ENCODE measurements at regions of chr2 and their contacts with region 1.

Region 1: DNA sequence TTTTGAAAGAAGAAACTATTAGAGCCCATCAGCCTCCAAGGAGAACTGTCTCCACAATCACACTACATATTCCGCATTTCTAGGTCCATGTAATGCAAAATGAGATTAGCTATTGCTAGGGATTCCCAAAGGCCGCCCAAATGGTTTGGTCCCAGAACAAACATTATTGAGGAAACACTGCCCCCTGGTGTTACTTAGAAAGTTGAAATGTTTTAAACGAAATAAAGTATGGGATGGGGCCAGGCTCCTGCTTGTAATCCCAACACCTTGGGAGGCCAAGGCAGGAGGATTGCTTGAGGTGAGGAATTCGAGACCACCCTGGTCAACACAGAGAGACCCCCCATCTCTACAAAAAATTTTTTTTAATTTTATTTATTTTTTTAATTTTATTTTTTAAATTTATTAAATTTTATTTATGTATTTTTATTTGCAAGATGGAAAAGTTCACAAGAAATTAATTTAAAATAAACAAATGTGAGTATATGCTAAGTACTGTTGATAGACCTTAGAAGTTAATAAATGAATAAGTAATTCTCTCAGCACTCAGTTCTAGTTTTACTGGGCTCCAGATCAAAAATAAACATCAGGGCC is 5.5 kb downstream of the NHEJ1 start:
- DNase-seq: peak in 1 of 2 experiments; percentile 12
- H3K4me3 ChIP-seq: no peak overlapping the region
- H3K27ac ChIP-seq: no peak overlapping the region
- H3K4me1 ChIP-seq: no peaks in the 10 kb centered on the region
- H3K27me3 ChIP-seq: no peaks in the 10 kb centered on the region
- CTCF ChIP-seq: peak; percentile 81

Region 2: DNA sequence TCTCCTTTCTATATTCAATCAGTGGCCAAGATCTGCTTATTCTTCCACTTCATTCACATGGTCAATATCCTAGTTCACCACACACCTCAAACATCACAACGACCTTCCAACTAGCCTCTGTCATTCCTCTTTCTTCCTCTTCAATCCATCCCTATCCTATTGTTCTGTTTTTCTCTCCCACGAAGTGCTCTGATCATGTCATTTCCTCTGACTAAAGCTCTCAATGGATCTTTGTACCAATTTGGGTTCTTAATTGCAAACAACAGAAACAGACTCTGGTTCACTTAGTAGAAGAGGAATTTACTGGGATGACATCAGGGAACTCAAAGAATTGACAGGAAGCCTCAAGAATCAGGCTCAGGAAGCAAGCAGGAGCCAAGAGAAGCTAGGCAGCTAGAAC is 251.0 kb before region 1 on chr2:
- CTCF ChIA-PET with region 1: no interaction called
- POLR2A ChIA-PET with region 1: no interaction called
- intact Hi-C with region 1: no loop called
- DNase-seq: no peak
- H3K4me3 ChIP-seq: no peak overlapping the region
- H3K27ac ChIP-seq: no peak overlapping the region
- H3K4me1 ChIP-seq: 0 out of 2 replicates have a peak, but pooled peaks cover 3% of the 10 kb centered on the region
- H3K27me3 ChIP-seq: no peaks in the 10 kb centered on the region
- CTCF ChIP-seq: no peak

Region 3: DNA sequence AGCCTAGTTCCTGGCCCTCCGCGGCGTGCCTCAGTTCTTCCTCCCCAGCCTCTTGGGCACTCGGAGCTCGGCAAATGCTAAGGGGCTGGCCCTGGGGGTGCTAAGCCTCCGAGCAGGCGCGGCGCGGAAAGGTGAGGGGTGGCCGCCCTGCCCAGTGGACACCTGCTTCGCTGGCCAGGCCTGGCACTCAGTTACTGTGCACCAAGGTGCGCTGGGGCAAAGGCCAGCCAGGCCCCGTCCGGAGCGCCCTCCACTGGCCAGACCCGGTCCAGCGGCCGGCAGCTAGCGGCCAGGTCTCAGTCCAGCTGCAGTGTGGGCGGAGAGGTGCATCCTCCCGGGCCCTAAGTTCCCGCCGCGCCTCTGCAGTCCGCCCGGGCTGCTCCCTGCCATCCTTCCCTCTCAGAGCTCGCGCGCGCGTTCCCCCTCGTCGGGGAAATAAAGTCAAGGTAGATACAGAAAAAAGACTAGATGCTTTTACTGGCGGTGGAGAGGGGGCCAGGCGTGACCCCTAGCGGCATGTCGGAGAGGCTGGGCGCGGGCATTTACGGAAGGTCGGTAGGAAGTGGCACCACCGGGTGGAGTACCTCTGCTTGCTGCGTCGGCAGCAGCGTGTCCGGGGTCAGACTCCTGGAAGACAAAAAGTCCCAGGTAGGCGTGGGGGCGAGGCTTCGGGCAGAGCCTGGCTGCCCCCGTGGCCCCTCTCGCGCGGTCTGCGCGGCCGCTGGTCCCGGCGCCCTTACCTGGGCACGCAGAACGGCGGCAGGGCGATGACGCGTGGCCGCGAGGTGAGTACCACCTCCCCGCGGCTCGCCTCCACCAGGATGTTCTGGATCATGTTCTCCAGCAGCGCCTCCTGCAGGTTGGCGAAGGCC is 152.5 kb before region 1 on chr2:
- CTCF ChIA-PET with region 1: interaction called, 4 read pairs
- POLR2A ChIA-PET with region 1: no interaction called
- intact Hi-C with region 1: loop called (anchors 5 kb)
- DNase-seq: peak in 1 of 2 experiments; percentile 75
- H3K4me3 ChIP-seq: peak overlapping the region; percentile 55
- H3K27ac ChIP-seq: no peak overlapping the region
- H3K4me1 ChIP-seq: 0 out of 2 replicates have a peak, but pooled peaks cover 5% of the 10 kb centered on the region
- H3K27me3 ChIP-seq: peaks cover 19% of the 10 kb centered on the region
- CTCF ChIP-seq: peak; percentile 71

Region 4: GRCh38 chr2:219029829-219030165 is 125.4 kb before region 1 on chr2:
- CTCF ChIA-PET with region 1: interaction called, 22 read pairs
- POLR2A ChIA-PET with region 1: interaction called, 4 read pairs
- intact Hi-C with region 1: loop called (anchors 1 kb)
- DNase-seq: peak; percentile 58 to 80
- H3K4me3 ChIP-seq: no peak overlapping the region
- H3K27ac ChIP-seq: no peak overlapping the region
- H3K4me1 ChIP-seq: no peaks in the 10 kb centered on the region
- H3K27me3 ChIP-seq: peaks cover 68% of the 10 kb centered on the region; the same call in 1 of the 2 replicates
- CTCF ChIP-seq: peak; percentile 93

Region 5: DNA sequence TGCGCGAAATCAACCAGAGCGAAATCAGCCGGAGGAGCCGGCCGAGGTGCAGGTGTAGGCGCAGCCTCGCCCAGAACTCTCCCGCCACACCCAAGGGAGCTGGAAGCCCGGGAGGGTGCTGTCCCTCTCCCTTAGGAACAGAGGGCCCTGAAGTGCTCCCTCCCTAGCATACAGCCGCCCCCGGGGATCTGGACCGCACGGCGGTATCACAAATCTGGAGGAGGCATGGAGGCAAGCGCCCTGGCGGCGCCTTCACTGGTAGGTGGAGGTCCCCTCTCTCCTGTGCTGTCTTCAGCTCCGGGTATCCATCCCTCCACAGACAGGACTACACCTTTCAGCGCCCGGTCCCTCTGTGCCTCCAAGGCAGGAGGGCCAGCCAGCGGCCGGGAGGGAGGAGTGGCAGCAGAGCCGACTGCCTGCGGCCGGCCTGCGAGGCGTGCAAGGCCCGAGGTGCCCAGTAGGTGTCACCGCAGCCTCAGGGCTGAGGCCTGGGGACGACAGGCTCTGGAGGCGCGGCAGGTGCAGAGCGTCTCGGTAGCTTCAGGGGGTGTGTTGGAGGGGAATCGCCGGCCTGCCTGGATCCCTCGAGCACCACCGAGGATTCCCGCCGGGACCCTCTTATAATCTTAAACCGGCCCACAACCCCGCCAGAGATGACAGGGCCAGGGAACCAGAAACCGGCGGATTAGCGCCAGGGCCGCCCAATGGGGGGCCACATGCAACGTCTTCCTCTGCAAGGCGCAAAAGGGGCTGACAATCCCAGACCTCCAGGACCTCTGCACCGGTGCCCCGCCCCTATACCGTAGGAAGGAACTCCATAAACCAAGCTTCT is 97.2 kb before region 1 on chr2:
- CTCF ChIA-PET with region 1: interaction called, 7 read pairs
- POLR2A ChIA-PET with region 1: no interaction called
- intact Hi-C with region 1: loop called (anchors 1 kb)
- DNase-seq: peak in 1 of 2 experiments; percentile 69
- H3K4me3 ChIP-seq: no peak overlapping the region
- H3K27ac ChIP-seq: no peak overlapping the region
- H3K4me1 ChIP-seq: no peaks in the 10 kb centered on the region
- H3K27me3 ChIP-seq: peaks cover 70% of the 10 kb centered on the region
- CTCF ChIP-seq: peak; percentile 80

Region 6: DNA sequence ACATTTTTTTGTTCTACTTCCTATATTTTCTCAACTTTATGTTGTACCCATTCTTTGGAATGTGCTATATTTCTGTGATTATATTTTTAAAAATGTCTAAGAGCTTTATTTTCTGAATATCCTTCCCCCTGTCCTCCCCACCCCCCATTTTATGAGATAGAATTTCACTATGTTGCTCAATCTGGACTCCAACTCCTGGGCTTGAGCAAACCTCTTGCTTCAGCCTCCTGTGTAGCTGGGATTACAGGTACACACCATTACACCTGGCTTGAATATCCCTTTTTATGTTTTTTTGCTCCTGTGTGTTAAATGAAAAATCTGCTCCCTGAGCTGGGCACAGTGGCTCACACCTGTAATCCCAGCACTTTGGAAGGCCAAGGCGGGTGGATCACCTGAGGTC is 42.2 kb after region 1 on chr2:
- CTCF ChIA-PET with region 1: interaction called, 13 read pairs
- POLR2A ChIA-PET with region 1: no interaction called
- intact Hi-C with region 1: no loop called
- DNase-seq: no peak
- H3K4me3 ChIP-seq: no peak overlapping the region
- H3K27ac ChIP-seq: no peak overlapping the region
- H3K4me1 ChIP-seq: no peaks in the 10 kb centered on the region
- H3K27me3 ChIP-seq: no peaks in the 10 kb centered on the region
- CTCF ChIP-seq: no peak

Region 7: DNA sequence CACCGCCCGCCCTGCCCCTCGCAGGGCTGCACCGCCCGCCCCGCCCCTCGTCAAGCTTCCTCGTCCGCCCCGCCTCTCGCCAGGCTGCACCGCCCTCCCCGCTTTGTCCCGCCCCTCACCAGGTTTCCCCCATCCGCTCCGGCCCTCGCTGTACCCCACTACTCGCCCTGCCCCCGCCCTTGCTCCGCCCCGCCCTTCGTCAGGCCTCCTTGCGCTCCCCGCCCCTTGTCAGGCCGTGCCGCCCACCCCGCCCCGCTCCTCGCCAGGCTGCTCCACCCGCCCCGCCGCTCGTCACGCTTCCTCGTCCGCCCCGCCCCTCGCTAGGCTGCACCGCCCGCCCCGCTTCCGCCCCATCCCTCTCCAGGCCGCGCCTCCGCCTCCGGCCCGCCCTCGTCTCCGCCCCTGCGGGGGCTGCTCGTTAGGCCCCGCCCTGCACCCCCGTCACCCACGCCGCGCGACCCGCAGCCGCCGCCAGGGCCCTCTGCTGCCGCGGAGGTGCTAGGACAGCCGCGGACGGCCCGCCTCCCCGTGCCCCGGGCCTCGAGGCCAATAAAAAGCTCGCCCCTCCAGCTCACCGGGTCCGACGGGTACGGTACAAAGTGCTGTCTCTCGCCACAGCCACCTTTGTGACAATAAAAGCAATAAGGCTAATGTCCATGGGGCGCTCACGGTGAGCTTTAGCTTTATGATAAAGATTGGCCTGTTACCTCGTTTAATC is 233.1 kb after region 1 on chr2:
- CTCF ChIA-PET with region 1: no interaction called
- POLR2A ChIA-PET with region 1: interaction called, 22 read pairs
- intact Hi-C with region 1: loop called (anchors 1 kb)
- DNase-seq: peak; percentile 71 to 98
- H3K4me3 ChIP-seq: peak overlapping the region; percentile 53
- H3K27ac ChIP-seq: peak overlapping the region; percentile 30
- H3K4me1 ChIP-seq: peaks cover 6% of the 10 kb centered on the region; the same call in 1 of the 2 replicates
- H3K27me3 ChIP-seq: no peaks in the 10 kb centered on the region
- CTCF ChIP-seq: peak; percentile 60